SK-N-SH (cell line): ENCODE measurements at regions of chr14 and their contacts with region 1.

Region 1: DNA sequence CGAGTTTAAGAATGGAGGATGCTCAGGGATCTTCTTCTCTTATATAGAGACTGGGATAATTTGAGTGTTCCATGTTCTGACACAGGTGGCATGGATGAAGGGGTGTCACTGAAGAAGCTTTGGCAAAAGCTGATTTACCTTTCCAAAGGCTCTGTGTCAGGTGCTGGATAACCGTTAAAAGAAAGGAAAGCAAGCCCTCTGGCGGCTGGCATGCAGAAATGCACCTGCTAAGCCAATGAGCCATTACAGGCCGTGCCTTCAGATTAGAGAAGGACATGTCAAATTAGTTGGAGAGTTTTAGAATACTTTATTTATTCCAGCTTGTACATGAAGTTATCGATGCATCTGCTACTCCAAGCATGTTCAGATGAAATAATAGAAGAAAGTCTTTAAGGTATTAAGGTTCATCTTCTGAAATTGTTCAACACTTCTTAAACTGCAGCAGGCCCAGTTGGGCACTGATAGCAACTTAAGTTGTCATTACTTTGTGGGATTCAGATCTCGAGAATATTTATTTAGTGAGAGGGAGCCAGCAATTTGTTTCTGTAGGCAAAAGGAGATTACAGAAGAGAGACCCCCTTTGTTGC is 678.2 kb downstream of the NRXN3 start:
- DNase-seq: peak; percentile 16
- H3K4me3 ChIP-seq: no peak overlapping the region; a peak in 1 of 4 replicates
- H3K27ac ChIP-seq: no peak overlapping the region
- H3K4me1 ChIP-seq: no peaks in the 10 kb centered on the region
- H3K27me3 ChIP-seq: no peaks in the 10 kb centered on the region
- CTCF ChIP-seq: peak; percentile 96
- EP300 ChIP-seq: no peak
- RAD21 ChIP-seq: peak; percentile 53

Region 2: GRCh38 chr14:78836777-78837176 is 11.6 kb before region 1 on chr14:
- CTCF ChIA-PET with region 1: interaction called, 22 read pairs
- POLR2A ChIA-PET with region 1: no interaction called
- DNase-seq: peak; percentile 21
- H3K4me3 ChIP-seq: no peak overlapping the region; a peak in 1 of 4 replicates
- H3K27ac ChIP-seq: no peak overlapping the region
- H3K4me1 ChIP-seq: peaks cover 0 to 3% of the 10 kb centered on the region in 2 experiments; a peak in 2 of 4 replicates
- H3K27me3 ChIP-seq: no peaks in the 10 kb centered on the region; the same call in 1 of the 2 replicates
- CTCF ChIP-seq: peak; percentile 57
- EP300 ChIP-seq: no peak
- RAD21 ChIP-seq: peak; percentile 71